ENCODE measurements at regions of chr2 and their contacts with region 1.

Region 1: DNA sequence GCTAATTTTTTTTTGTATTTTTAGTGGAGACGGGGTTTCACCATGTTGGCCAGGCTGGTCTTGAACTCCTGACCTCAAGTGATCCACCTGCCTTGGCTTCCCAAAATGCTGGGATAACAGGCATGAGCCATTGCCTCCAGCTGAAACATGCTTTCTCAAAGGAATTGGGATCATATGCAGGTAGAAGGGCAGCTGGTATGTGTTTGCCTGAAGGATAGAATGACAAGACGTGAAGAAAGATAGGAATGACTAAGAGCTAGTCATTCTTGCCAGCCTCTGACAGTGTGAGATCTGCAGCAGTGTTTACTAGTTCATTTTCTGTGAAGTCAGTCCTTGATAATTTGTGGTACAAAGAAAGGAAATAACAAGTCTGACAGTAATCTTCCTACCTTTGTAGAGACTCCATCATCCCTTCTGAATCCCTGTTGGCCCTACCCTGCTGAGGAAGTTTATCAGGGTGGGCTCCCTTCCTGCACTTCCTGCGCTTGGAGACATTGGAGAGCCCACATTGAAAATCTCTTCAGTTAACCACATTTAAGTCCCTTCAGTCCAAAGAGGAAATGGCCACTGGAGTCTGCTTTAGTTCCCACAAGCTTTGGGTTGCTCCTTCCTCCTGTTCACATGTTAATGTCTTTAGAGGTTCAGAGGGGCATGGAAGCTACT is 14.7 kb downstream of the CFLAR start:
- DNase-seq: peak; percentile 78
- H3K4me3 Mint-ChIP-seq: no peak overlapping the region
- H3K27ac Mint-ChIP-seq: peak overlapping the region; percentile 63
- H3K4me1 Mint-ChIP-seq: peaks cover 48% of the 10 kb centered on the region
- H3K27me3 Mint-ChIP-seq: no peaks in the 10 kb centered on the region
- CTCF ChIP-seq: no peak

Region 2: DNA sequence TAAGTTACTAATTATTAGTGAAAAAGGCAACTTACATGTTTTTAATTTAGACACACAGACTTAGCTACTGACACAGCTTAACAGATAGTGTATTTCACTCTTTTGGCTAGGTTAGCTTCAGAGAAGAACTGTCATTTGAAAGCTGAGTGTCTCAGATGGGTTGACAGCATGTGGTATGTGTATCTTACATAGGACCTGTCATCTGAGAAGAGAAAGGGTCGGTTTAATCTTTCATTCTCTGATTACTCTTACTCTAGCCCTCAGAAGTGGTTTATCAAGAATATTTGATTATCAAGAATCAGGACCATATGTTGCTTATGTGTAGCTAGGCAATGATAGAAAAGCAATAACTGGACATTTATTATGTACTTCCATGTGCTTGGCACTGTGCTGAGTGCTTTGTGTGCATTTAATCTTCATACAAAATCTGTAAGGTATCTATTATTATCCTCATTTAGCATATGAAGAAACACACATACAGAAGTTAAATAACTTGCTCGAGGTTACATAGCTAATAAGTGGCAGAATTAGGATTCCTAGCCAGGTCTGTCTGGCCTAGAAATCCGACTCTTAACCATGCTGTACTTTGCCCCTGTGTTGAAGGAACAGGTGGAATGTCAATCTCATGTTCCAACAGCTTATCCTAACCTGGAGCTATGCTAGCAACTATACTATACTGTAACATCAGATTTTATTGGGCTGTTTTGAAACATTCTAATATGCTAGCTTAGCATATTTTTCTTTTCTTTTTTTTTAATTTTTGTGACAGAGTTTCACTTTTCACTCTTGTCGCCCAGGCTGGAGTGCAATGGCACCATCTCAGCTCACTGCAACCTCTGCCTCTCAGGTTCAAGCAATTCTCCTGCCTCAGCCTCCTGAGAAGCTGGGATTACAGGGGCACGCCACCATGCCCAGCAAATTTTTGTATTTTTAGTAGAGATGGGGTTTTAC is 13.7 kb after region 1 on chr2:
- CTCF ChIA-PET with region 1: interaction called, 11 read pairs
- POLR2A ChIA-PET with region 1: interaction called, 20 read pairs
- intact Hi-C with region 1: loop called (anchors 2 kb)
- DNase-seq: no peak
- H3K4me3 Mint-ChIP-seq: no peak overlapping the region
- H3K27ac Mint-ChIP-seq: no peak overlapping the region
- H3K4me1 Mint-ChIP-seq: peaks cover 14% of the 10 kb centered on the region
- H3K27me3 Mint-ChIP-seq: no peaks in the 10 kb centered on the region
- CTCF ChIP-seq: no peak

Region 3: GRCh38 chr2:201151127-201151981 is 20.7 kb after region 1 on chr2:
- CTCF ChIA-PET with region 1: interaction called, 5 read pairs
- POLR2A ChIA-PET with region 1: interaction called, 20 read pairs
- intact Hi-C with region 1: loop called (anchors 2 kb)
- DNase-seq: peak; percentile 72
- H3K4me3 Mint-ChIP-seq: peak overlapping the region; percentile 46
- H3K27ac Mint-ChIP-seq: peak overlapping the region; percentile 97
- H3K4me1 Mint-ChIP-seq: peaks cover 45% of the 10 kb centered on the region
- H3K27me3 Mint-ChIP-seq: no peaks in the 10 kb centered on the region
- CTCF ChIP-seq: no peak

Measured in MCF 10A (cell line).